ENCODE measurements at regions of chr17 and their contacts with region 1.

Region 1: DNA sequence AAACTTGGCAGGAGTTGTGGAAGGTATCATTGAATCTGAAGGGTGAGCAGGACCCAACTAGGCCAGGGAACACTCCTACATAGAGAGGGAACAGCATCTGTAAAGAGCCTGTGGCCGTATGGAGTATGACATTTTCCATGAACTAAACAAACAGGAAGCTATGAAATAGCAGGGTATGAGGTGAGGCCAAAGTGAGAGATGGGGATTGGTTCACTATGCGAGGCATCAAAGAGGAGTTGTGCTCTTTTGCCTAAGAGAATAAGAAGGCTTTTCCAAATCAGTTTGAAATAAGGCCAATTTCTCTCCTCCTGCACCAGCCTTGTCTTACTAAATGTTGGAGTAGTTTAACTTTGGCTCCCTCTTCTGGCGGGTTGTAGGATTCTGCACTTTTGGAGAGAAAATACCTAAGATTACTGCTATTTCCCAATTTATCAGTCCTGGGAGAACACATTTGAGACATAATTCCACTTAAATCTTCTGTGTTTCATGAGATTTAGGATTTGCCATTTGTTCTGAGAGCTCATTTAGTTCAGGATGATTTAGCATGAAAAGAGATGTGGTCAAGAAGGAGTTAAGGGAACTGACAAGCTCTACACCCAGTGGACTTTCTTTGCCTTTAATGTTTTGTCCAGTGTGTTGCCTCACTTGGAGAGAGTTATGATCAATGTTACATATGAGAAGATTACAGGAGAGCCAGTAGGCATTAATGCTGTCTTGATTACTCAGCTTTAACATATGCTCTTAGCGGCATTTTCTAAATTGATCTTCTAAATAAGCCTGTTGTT is 55.4 kb downstream of the TNRC6C start:
- DNase-seq: peak; percentile 52 to 69 (median 59)
- ATAC-seq: peak; percentile 68
- H3K4me3 ChIP-seq: no peak overlapping the region
- H3K27ac ChIP-seq: no peak overlapping the region
- H3K4me1 ChIP-seq: no peaks in the 10 kb centered on the region
- H3K27me3 ChIP-seq: no peaks in the 10 kb centered on the region
- CTCF ChIP-seq: peak; percentile 40 to 76 (median 65)
- POLR2A ChIP-seq: no peak

Region 2: GRCh38 chr17:77542551-77543490 is 471.1 kb before region 1 on chr17:
- intact Hi-C with region 1: loop called (anchors 10 kb)
- DNase-seq: peak; percentile 68 to 77 (median 72)
- ATAC-seq: peak; percentile 85
- H3K4me3 ChIP-seq: no peak overlapping the region
- H3K27ac ChIP-seq: no peak overlapping the region
- H3K4me1 ChIP-seq: no peaks in the 10 kb centered on the region
- H3K27me3 ChIP-seq: peaks cover 0 to 6% of the 10 kb centered on the region in 2 donors
- CTCF ChIP-seq: peak; percentile 49 to 80 (median 68)
- POLR2A ChIP-seq: no peak

Region 3: GRCh38 chr17:77914385-77915254 is 99.3 kb before region 1 on chr17:
- intact Hi-C with region 1: no loop called
- DNase-seq: peak; percentile 28 to 32 (median 28)
- ATAC-seq: peak; percentile 65
- H3K4me3 ChIP-seq: no peak overlapping the region
- H3K27ac ChIP-seq: no peak overlapping the region
- H3K4me1 ChIP-seq: peaks cover 8% of the 10 kb centered on the region
- H3K27me3 ChIP-seq: peaks cover 0 to 5% of the 10 kb centered on the region in 2 donors
- CTCF ChIP-seq: peak in 6 of 7 experiments; percentile 9 to 50 (median 34)
- POLR2A ChIP-seq: no peak